IMR-90 (cell line): ENCODE measurements at regions of chr2 and their contacts with region 1.

Region 1: GRCh38 chr2:237322564-237322963 is 91.4 kb downstream of the COL6A3 start:
- DNase-seq: no peak
- ATAC-seq: no peak
- H3K4me3 ChIP-seq: no peak overlapping the region
- H3K27ac ChIP-seq: peak overlapping the region; percentile 96
- H3K4me1 ChIP-seq: peaks cover 27% of the 10 kb centered on the region
- H3K27me3 ChIP-seq: no peaks in the 10 kb centered on the region
- CTCF ChIP-seq: peak; percentile 27; the same call in 1 of the 2 replicates
- POLR2A ChIP-seq: peak; percentile 16
- RAD21 ChIP-seq: peak; percentile 24; the same call in 1 of the 2 replicates

Region 2: GRCh38 chr2:237154082-237154638 is 168.4 kb before region 1 on chr2:
- CTCF ChIA-PET with region 1: no interaction called
- POLR2A ChIA-PET with region 1: no interaction called
- dilution Hi-C with region 1: no loop called
- in situ Hi-C with region 1: no loop called
- intact Hi-C with region 1: loop called (anchors 2 kb)
- DNase-seq: peak; percentile 81
- ATAC-seq: no peak; the same call in 1 of the 2 replicates
- H3K4me3 ChIP-seq: no peak overlapping the region
- H3K27ac ChIP-seq: peak overlapping the region; percentile 1; the same call in 1 of the 2 replicates
- H3K4me1 ChIP-seq: peaks cover 30% of the 10 kb centered on the region
- H3K27me3 ChIP-seq: no peaks in the 10 kb centered on the region
- CTCF ChIP-seq: peak; percentile 91
- POLR2A ChIP-seq: 0 out of 2 replicates have a peak, but pooled peaks have one; percentile 21
- RAD21 ChIP-seq: peak; percentile 97